Naive thymus-derived CD4-positive, alpha-beta T cell (primary cell): ENCODE measurements at regions of chr3 and their contacts with region 1.

Region 1: DNA sequence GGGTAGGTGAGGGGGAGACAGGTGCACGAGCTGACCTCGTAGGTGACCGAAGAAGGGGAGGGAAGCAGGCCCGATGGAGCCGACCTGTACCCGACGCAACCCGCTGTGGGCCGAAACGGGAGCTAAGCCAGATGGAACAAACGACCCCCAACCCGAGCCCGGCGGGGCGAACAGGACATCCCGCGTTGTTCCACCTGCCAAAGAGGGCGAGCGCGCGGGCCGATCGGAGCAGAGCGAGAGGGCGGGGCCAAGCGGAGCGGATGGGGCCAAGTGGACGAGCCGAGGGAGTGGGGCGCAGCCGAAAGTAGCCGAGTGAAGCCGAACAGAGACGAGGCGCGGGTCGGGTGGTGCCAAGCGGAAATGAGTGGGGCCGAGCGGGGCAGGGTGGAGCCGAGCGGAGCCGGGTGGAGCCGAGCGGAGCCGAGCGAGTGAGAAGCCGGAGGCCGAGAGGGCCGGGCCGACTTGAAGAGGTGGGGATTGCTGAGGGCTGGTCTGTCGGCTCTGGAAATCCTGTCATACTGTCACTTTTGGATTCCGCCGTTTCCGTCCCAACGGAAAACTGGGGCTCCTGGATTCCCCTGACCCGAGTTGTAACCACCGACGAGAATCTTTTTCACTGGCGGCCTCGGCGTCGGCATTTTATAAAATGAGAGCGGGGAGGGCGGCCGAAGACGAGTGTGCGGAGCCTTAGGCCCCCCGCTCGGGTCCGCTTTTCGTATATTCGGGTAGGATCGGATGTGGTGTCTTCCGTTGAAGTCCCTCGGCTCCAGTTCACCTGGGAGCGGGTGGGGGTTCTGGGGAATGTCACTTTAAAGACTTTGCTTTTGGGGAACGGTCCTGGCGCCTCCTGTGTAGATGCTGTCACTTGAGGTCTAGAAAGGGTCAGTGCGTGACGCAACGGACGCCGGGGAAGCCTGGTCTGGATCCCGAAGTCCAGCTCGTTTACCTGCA is 15.6 kb upstream of the WNT7A start:
- DNase-seq: peak; percentile 85 to 95 (median 93)
- ATAC-seq: peak; percentile 97
- H3K4me3 ChIP-seq: peak overlapping the region; percentile 84
- H3K4me3 Mint-ChIP-seq: peak overlapping the region; percentile 67 to 94 (median 90)
- H3K27ac ChIP-seq: peak overlapping the region; percentile 94
- H3K27ac Mint-ChIP-seq: peak overlapping the region; percentile 79 to 95 (median 88)
- H3K4me1 ChIP-seq: peaks cover 26 to 31% of the 10 kb centered on the region in 2 donors
- H3K4me1 Mint-ChIP-seq: peaks cover 5 to 47% (median 29%) of the 10 kb centered on the region in 7 donors
- H3K27me3 ChIP-seq: no peaks in the 10 kb centered on the region
- H3K27me3 Mint-ChIP-seq: peaks cover 0 to 9% (median 0%) of the 10 kb centered on the region in 5 donors

Region 2: GRCh38 chr3:13792512-13793371 is 102.7 kb before region 1 on chr3:
- CTCF ChIA-PET with region 1: no interaction called
- POLR2A ChIA-PET with region 1: no interaction called
- intact Hi-C with region 1: no loop called
- DNase-seq: no peak
- ATAC-seq: no peak
- H3K4me3 ChIP-seq: no peak overlapping the region
- H3K4me3 Mint-ChIP-seq: no peak overlapping the region
- H3K27ac ChIP-seq: no peak overlapping the region
- H3K27ac Mint-ChIP-seq: no peak overlapping the region
- H3K4me1 ChIP-seq: no peaks in the 10 kb centered on the region
- H3K4me1 Mint-ChIP-seq: peaks cover 0 to 8% (median 7%) of the 10 kb centered on the region in 7 donors
- H3K27me3 ChIP-seq: no peaks in the 10 kb centered on the region
- H3K27me3 Mint-ChIP-seq: peaks cover 0 to 16% (median 4%) of the 10 kb centered on the region in 5 donors

Region 3: DNA sequence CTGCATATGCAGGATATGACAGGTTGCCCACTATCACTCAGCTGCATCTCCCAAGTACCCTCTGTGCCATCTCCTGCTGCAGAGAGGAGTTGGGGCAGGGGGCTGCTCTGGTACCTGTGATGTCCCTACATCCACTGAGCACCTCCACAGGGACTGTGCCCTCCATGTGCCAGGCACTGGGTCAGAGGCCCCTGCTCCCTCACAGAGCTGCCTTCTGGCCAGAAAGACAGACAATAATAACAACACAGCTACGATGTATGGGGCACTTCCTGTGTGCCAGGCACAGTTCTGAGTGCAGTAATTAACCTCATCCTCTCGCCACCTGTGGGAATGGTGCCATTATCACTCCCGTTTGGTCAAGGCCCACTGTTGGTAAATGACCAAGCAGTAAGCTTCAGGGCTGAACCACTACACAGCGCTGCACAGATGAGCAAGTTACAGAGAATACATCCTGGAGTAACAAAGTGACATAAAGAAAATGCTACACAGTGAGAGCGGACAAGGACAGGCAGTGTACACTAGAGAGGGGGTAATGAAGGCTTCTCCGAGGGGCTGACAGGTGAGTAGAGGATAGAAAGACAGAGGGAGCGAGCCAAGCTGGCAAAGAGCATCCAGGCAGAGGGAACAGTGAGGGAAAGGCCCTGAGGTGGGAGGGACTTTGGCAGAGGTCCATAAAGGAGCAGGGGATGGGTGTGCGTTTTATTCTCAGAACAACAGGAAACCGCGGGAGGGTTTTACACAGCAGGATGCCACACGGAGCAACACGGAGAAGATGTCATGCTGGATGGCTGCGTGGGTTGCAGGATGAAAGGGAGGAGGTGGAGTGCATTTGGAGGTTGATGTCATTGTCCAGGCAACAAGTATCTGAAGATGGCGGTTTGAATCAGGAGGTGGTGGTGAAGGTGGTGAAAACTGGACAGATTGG is 29.1 kb before region 1 on chr3:
- CTCF ChIA-PET with region 1: interaction called, 3 read pairs
- POLR2A ChIA-PET with region 1: interaction called, 19 read pairs
- intact Hi-C with region 1: loop called in 1 of 2 experiments (anchors 1 kb)
- DNase-seq: peak; percentile 28 to 92 (median 86)
- ATAC-seq: peak; percentile 93
- H3K4me3 ChIP-seq: peak overlapping the region; percentile 26
- H3K4me3 Mint-ChIP-seq: peak overlapping the region; percentile 74 to 86 (median 78)
- H3K27ac ChIP-seq: peak overlapping the region; percentile 92
- H3K27ac Mint-ChIP-seq: peak overlapping the region; percentile 94 to 99 (median 97)
- H3K4me1 ChIP-seq: peaks cover 21 to 61% of the 10 kb centered on the region in 2 donors
- H3K4me1 Mint-ChIP-seq: peaks cover 44 to 87% (median 74%) of the 10 kb centered on the region in 7 donors
- H3K27me3 ChIP-seq: no peaks in the 10 kb centered on the region
- H3K27me3 Mint-ChIP-seq: peaks cover 0 to 8% (median 0%) of the 10 kb centered on the region in 5 donors

Region 4: GRCh38 chr3:14124615-14125190 is 229.3 kb after region 1 on chr3 and contains the starts of genes CHCHD4 and TMEM43:
- CTCF ChIA-PET with region 1: no interaction called
- POLR2A ChIA-PET with region 1: interaction called, 13 read pairs
- intact Hi-C with region 1: loop called (anchors 1 kb)
- DNase-seq: peak; percentile 91 to 99 (median 98)
- ATAC-seq: peak; percentile 96
- H3K4me3 ChIP-seq: peak within 1 kb of the TSS; percentile 100
- H3K4me3 Mint-ChIP-seq: peak within 1 kb of the TSS; percentile 93 to 98 (median 96)
- H3K27ac ChIP-seq: peak within 1 kb of the TSS; percentile 89
- H3K27ac Mint-ChIP-seq: peak within 1 kb of the TSS; percentile 87 to 97 (median 94)
- H3K4me1 ChIP-seq: peaks cover 28 to 30% of the 10 kb centered on the region in 2 donors
- H3K4me1 Mint-ChIP-seq: peaks cover 43 to 70% (median 63%) of the 10 kb centered on the region in 7 donors
- H3K27me3 ChIP-seq: no peaks in the 10 kb centered on the region
- H3K27me3 Mint-ChIP-seq: no peaks in the 10 kb centered on the region
- total RNA-seq, gene CHCHD4: 3.3 to 14.1 (median 8.4) TPM
- total RNA-seq, gene TMEM43: 30.1 to 54.8 (median 46.5) TPM

Region 5: GRCh38 chr3:14261229-14261628 is 365.8 kb after region 1 on chr3:
- CTCF ChIA-PET with region 1: interaction called, 6 read pairs
- POLR2A ChIA-PET with region 1: no interaction called
- intact Hi-C with region 1: loop called (anchors 1 kb)
- DNase-seq: peak; percentile 32 to 78 (median 62)
- ATAC-seq: peak; percentile 77
- H3K4me3 ChIP-seq: no peak overlapping the region
- H3K4me3 Mint-ChIP-seq: no peak overlapping the region
- H3K27ac ChIP-seq: no peak overlapping the region
- H3K27ac Mint-ChIP-seq: no peak overlapping the region
- H3K4me1 ChIP-seq: no peaks in the 10 kb centered on the region
- H3K4me1 Mint-ChIP-seq: no peaks in the 10 kb centered on the region
- H3K27me3 ChIP-seq: no peaks in the 10 kb centered on the region
- H3K27me3 Mint-ChIP-seq: peaks cover 0 to 14% (median 0%) of the 10 kb centered on the region in 5 donors

Region 6: DNA sequence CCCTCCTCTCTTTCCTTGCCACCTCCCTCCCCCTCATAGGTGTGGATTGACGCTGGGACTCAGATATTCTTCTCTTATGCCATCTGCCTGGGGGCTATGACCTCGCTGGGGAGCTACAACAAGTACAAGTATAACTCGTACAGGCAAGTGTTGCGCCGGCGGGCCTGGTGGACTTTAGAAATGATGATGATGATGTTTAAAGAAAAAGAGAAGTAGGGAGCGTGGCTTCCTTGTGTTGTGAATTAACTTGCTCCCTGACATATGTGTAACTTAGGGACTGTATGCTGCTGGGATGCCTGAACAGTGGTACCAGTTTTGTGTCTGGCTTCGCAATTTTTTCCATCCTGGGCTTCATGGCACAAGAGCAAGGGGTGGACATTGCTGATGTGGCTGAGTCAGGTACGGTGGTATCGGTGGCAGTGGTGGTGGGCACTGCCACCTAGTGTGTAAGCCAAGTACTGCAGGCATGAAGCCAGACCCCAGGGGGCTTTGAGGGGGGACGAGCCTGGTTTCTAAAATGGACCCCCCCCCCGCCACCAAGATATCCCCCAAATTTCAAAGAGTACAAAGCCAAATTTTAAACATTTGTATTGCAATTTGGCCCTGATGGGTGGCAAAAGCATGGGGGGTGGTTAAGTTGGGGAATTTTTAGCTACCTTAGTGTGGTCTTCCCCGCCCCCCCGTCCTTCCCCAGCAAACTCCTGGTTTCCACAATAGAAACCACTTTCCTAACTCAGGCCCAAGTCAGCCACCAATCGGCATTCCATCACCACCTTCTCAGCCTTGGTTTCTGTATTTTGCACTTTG is 572.6 kb after region 1 on chr3:
- CTCF ChIA-PET with region 1: interaction called, 16 read pairs
- POLR2A ChIA-PET with region 1: interaction called, 3 read pairs
- intact Hi-C with region 1: loop called in 1 of 2 experiments (anchors 1 kb)
- DNase-seq: peak; percentile 18 to 63 (median 40)
- ATAC-seq: peak; percentile 77
- H3K4me3 ChIP-seq: no peak overlapping the region
- H3K4me3 Mint-ChIP-seq: no peak overlapping the region
- H3K27ac ChIP-seq: no peak overlapping the region
- H3K27ac Mint-ChIP-seq: peak overlapping the region in 2 of 9 donors; percentile 56 to 75
- H3K4me1 ChIP-seq: no peaks in the 10 kb centered on the region
- H3K4me1 Mint-ChIP-seq: peaks cover 0 to 6% (median 0%) of the 10 kb centered on the region in 7 donors
- H3K27me3 ChIP-seq: no peaks in the 10 kb centered on the region
- H3K27me3 Mint-ChIP-seq: no peaks in the 10 kb centered on the region

Region 7: GRCh38 chr3:14947886-14948555 is 1052.6 kb after region 1 on chr3:
- CTCF ChIA-PET with region 1: no interaction called
- POLR2A ChIA-PET with region 1: no interaction called
- intact Hi-C with region 1: loop called in 1 of 2 experiments (anchors 2 kb)
- DNase-seq: peak; percentile 93 to 98 (median 96)
- ATAC-seq: peak; percentile 94
- H3K4me3 ChIP-seq: peak overlapping the region; percentile 93
- H3K4me3 Mint-ChIP-seq: peak overlapping the region; percentile 97 to 100 (median 98)
- H3K27ac ChIP-seq: peak overlapping the region; percentile 99
- H3K27ac Mint-ChIP-seq: peak overlapping the region; percentile 98 to 100 (median 100)
- H3K4me1 ChIP-seq: peaks cover 19 to 22% of the 10 kb centered on the region in 2 donors
- H3K4me1 Mint-ChIP-seq: peaks cover 31 to 74% (median 60%) of the 10 kb centered on the region in 7 donors
- H3K27me3 ChIP-seq: no peaks in the 10 kb centered on the region
- H3K27me3 Mint-ChIP-seq: peaks cover 0 to 2% (median 0%) of the 10 kb centered on the region in 5 donors

Region 8: GRCh38 chr3:15795651-15796308 is 1900.3 kb after region 1 on chr3:
- CTCF ChIA-PET with region 1: no interaction called
- POLR2A ChIA-PET with region 1: no interaction called
- intact Hi-C with region 1: no loop called
- DNase-seq: peak in 2 of 9 donors; percentile 5 to 19
- ATAC-seq: peak; percentile 41
- H3K4me3 ChIP-seq: no peak overlapping the region
- H3K4me3 Mint-ChIP-seq: peak overlapping the region in 3 of 10 donors; percentile 11 to 96 (median 60)
- H3K27ac ChIP-seq: no peak overlapping the region
- H3K27ac Mint-ChIP-seq: peak overlapping the region in 2 of 9 donors; percentile 15 to 97
- H3K4me1 ChIP-seq: peaks cover 18 to 27% of the 10 kb centered on the region in 2 donors
- H3K4me1 Mint-ChIP-seq: peaks cover 37 to 80% (median 69%) of the 10 kb centered on the region in 7 donors
- H3K27me3 ChIP-seq: no peaks in the 10 kb centered on the region
- H3K27me3 Mint-ChIP-seq: no peaks in the 10 kb centered on the region